Activated CD8-positive, alpha-beta T cell treated with anti-CD3 and anti-CD28 coated beads, Interleukin-2, amount 10 ng/mL, durations not matched to agents 7 days and 5 days (primary cell): ENCODE measurements at regions of chr2 and their contacts with region 1.

Region 1: DNA sequence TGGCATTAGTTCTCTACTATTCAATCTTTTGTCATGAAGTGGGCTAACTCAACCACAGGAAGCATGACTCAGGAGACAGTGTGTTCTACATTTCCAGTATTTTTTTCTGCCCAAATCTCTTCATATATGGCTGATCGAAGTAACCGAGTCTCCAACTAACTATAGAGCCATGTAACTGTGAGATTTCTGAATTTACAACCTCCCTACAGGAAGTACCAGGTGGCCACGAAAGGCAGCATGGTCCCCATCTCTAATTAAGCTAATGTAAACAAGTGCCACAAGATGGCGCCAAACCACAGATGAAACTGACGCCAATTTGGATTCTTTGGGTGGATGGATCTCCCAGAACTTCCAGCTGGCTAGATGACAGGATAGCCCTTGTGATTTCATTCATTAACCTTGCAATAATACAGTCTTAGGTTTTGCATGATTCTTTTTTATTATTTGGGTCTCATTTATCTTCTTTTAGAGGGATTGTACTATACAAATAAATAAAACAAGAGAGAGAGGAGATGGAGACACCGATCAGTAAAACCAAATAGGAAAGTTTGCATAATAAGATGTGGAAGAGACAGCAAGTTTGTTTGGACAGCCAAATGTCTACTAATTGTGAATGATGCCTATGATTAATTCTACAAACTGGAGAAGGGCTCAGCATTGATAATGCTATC is 18.3 kb upstream of the ARHGAP15 start:
- DNase-seq: peak; percentile 83
- ATAC-seq: peak; percentile 92
- H3K4me3 Mint-ChIP-seq: peak overlapping the region; percentile 51
- H3K27ac Mint-ChIP-seq: peak overlapping the region; percentile 92
- H3K4me1 Mint-ChIP-seq: peaks cover 38% of the 10 kb centered on the region
- H3K27me3 Mint-ChIP-seq: no peaks in the 10 kb centered on the region

Region 2: DNA sequence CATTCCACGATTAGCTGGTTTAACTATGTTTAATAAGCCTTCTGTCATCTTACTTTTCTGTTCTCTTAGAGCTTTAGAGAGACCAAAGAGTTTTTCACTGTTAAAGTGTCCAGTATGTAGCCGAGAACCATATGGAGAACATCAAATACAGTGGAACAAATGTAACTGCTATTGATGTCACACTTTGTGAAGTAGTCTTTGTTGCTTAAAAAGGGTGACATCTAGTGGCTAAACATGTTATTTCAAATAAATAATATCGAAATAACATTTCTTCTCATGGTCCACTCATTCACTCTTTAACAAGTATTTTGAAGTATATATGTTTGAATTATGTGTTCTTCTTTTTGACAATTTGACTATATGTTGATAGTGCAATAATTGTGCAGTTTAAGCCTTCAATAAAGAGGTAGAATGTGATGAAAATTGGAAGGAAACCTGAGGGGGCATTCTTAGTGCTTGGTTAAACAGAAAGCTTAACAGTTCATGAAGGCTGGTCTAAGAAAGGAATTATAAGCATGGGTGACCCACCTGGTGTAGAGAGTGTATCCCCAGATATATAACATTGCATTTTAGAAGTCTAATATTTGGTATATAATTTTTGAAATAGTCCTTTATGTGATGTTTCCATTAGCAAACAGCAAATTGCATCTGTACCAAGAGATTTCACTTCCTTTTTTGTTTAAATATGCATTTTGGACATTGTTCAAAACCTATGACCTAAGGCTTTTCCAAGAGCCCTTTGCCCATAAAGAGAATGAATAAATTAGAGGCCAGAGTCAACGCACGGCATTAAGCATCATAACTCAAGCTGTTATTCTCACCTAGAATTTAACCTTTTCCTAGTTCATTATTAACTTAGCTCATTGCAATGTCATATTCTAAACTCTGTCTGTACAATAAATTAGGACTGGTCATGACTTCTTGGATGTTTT is 121.4 kb before region 1 on chr2:
- CTCF ChIA-PET with region 1: no interaction called
- POLR2A ChIA-PET with region 1: no interaction called
- DNase-seq: no peak
- ATAC-seq: no peak
- H3K4me3 Mint-ChIP-seq: no peak overlapping the region
- H3K27ac Mint-ChIP-seq: no peak overlapping the region
- H3K4me1 Mint-ChIP-seq: no peaks in the 10 kb centered on the region
- H3K27me3 Mint-ChIP-seq: peaks cover 17% of the 10 kb centered on the region

Region 3: DNA sequence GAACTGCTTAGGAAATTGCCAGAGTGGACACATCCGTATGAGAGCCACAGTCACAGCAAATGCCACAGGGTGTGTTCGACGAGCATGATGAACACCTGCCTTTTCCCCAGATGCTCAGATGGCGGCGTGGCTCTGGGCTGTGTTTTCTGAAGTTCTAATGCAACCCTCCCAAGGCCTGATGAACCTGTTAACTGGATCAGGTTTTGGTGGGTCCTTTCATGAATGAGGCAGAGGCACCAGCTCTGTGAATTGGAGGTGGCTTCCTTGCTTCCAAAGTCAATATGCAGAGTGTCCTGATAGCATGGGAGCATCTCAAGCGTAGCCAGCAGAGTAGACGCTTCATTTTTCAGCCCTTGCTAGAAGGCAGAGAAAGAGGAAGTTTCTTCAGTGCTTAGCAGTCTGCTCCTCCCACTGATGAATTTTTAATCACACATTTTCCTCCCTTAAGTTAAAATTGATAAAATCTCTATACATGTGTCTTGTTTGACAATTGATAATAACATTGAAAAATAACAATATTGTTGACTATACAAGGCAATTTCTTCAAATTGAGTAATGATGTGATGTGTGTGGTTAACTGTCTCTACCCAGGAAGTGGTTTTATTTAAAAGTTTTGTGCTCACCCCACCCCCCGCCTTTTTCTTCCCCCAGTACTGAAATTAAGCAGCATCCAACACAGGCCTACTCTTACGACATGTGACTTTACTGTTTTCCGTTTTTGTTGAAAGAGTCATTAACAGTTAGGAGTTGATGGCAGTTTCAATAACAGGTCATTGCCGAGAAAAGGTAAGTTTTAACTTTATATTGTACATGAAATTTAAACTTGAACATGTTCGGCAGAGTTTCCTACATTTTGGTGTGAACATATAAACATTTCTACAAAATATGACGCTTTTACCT is 18.0 kb after region 1 on chr2 and contains the start of gene ARHGAP15:
- CTCF ChIA-PET with region 1: interaction called, 58 read pairs
- POLR2A ChIA-PET with region 1: interaction called, 9 read pairs
- DNase-seq: peak; percentile 90
- ATAC-seq: peak; percentile 86
- H3K4me3 Mint-ChIP-seq: peak within 1 kb of the TSS; percentile 79
- H3K27ac Mint-ChIP-seq: peak within 1 kb of the TSS; percentile 100
- H3K4me1 Mint-ChIP-seq: peaks cover 48% of the 10 kb centered on the region
- H3K27me3 Mint-ChIP-seq: no peaks in the 10 kb centered on the region
- total RNA-seq, gene ARHGAP15: 154 to 158 TPM

Region 4: GRCh38 chr2:143205106-143205764 is 94.3 kb after region 1 on chr2:
- CTCF ChIA-PET with region 1: interaction called, 29 read pairs
- POLR2A ChIA-PET with region 1: no interaction called
- DNase-seq: no peak
- ATAC-seq: peak; percentile 77
- H3K4me3 Mint-ChIP-seq: no peak overlapping the region
- H3K27ac Mint-ChIP-seq: peak overlapping the region; percentile 74
- H3K4me1 Mint-ChIP-seq: peaks cover 48% of the 10 kb centered on the region
- H3K27me3 Mint-ChIP-seq: no peaks in the 10 kb centered on the region

Region 5: DNA sequence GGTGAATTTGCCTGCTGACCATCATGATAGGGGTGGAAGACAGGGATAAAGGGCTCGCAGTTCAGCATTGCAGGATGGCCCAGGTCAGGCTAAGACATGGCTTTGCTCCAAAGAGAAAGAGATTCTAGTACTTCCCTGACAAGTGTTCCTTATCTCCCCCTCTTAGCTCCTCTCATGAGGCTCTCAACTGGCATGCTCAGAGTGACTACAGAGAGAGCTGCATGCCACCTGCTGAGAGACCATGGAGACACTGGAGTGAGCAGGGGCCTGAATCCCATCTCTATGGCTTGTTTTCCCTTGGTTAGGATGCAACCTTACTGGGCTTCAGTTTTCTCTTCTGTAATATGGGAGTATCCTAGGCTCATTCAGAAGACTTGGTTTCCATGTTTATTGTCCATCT is 112.7 kb after region 1 on chr2:
- CTCF ChIA-PET with region 1: interaction called, 26 read pairs
- POLR2A ChIA-PET with region 1: no interaction called
- DNase-seq: no peak
- ATAC-seq: no peak
- H3K4me3 Mint-ChIP-seq: no peak overlapping the region
- H3K27ac Mint-ChIP-seq: peak overlapping the region; percentile 17
- H3K4me1 Mint-ChIP-seq: peaks cover 46% of the 10 kb centered on the region
- H3K27me3 Mint-ChIP-seq: no peaks in the 10 kb centered on the region

Region 6: GRCh38 chr2:143254110-143254509 is 143.2 kb after region 1 on chr2:
- CTCF ChIA-PET with region 1: interaction called, 126 read pairs
- POLR2A ChIA-PET with region 1: interaction called, 13 read pairs
- DNase-seq: peak; percentile 63
- ATAC-seq: peak; percentile 26
- H3K4me3 Mint-ChIP-seq: peak overlapping the region; percentile 45
- H3K27ac Mint-ChIP-seq: peak overlapping the region; percentile 81
- H3K4me1 Mint-ChIP-seq: peaks cover 75% of the 10 kb centered on the region
- H3K27me3 Mint-ChIP-seq: no peaks in the 10 kb centered on the region